ENCODE measurements at regions of chr1 and their contacts with region 1.

Region 1: DNA sequence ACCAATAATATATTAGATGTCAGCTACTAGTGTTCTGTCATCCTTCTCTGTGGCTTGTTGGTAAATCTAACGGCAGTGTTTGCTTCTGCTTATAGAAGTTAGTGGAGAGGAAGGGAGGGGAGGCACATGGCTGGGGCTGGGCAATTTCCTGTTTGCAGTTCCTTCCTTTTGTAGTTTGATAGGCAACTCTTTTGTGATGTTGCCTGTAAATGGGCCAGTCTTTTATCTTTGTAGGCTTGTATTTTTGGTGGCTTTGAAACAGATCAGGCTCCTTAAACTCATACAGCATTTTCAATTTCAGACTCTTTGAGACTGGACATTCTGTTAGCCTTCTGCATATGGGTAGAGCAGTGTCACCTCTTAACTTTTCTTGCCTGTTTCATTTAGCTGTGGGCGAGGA is 48.1 kb downstream of the CDC14A start:
- DNase-seq: peak; percentile 78
- H3K4me3 Mint-ChIP-seq: peak overlapping the region; percentile 42
- H3K27ac Mint-ChIP-seq: peak overlapping the region; percentile 93
- H3K4me1 Mint-ChIP-seq: peaks cover 87% of the 10 kb centered on the region
- H3K27me3 Mint-ChIP-seq: no peaks in the 10 kb centered on the region

Region 2: DNA sequence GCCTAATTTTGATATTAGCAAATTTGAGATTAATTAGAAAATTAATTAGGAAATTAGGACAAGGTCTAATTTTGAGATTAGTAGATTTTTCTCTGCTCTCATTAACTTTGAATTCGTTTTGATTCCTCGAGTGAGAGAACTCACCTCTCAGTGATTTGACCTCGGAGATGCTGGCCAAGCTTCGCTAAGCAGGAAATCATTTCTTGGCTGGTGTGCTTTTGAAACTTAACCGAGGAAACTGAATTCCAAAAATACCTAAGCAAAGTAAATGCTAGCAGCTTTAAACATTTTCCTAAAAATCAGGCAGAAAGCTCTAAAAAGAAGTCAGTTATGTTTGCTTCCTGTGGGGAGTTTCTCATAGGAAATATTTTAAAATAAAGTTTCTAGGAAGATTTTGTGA is 13.2 kb before region 1 on chr1:
- CTCF ChIA-PET with region 1: interaction called, 8 read pairs
- POLR2A ChIA-PET with region 1: interaction called, 22 read pairs
- DNase-seq: no peak
- H3K4me3 Mint-ChIP-seq: peak overlapping the region; percentile 58
- H3K27ac Mint-ChIP-seq: peak overlapping the region; percentile 72
- H3K4me1 Mint-ChIP-seq: peaks cover 64% of the 10 kb centered on the region
- H3K27me3 Mint-ChIP-seq: no peaks in the 10 kb centered on the region

Region 3: DNA sequence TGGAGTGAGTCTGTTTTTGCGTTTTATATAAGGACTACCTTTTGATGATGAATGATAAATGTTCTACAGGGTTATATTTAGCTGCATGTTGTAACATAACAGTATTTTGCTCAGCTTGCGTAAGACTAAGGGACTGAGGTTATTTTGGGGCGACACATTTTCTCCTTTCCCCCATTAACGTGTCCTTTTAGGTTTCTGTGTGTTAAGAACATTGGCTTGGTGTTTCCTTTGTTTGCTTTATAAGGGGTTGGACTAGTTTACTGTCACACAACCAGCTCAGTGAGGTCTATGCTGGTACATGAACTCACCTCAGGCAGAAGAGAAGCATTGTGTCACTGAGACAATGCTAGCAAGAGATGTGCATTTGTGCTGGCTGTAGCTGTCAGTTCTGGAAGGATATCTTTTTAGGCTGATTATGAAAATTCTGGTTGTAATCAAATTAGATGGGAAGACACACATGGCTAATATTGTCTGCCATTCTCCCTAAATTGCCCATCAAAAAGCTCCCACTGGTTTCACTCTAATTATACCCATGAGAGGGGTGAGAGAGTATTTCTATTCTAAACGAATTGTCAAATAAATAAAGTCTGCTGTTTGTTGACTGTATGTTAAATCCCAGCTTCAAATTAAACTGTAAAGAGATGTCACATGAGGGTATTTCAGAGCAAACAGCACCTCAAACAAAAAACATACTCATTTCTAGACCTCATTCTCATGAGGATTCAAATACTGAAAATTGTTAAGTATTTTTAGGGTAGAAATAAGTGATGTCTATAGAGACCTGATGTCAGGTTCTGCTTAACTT is 14.5 kb after region 1 on chr1:
- CTCF ChIA-PET with region 1: interaction called, 4 read pairs
- POLR2A ChIA-PET with region 1: interaction called, 30 read pairs
- DNase-seq: no peak
- H3K4me3 Mint-ChIP-seq: peak overlapping the region; percentile 24
- H3K27ac Mint-ChIP-seq: peak overlapping the region; percentile 62
- H3K4me1 Mint-ChIP-seq: peaks cover 62% of the 10 kb centered on the region
- H3K27me3 Mint-ChIP-seq: no peaks in the 10 kb centered on the region

Region 4: DNA sequence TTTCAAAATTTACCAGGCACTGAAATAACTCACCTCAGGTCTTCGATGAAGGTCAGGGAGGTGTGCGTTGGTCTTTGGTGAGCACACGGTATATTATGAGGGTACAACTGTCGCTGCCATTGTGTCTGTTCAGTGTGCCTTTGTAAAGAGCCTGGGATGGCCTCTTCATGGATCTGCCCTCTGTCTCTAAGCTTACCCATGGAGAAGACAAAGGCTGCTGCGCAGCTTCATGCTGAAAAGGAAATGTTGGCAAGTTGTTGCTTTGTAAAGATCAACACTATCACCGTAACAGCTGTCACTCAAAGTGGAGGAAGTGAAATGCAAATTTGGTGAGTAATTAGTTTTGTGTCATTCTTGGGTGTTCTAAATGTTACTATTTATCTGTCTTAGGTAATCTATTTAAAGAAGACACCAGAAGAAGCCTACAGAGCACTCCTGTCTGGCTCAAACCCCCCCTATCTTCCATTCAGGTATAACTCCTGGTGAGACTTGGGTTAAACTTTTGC is 23.5 kb after region 1 on chr1:
- CTCF ChIA-PET with region 1: interaction called, 13 read pairs
- POLR2A ChIA-PET with region 1: interaction called, 23 read pairs
- DNase-seq: peak; percentile 39
- H3K4me3 Mint-ChIP-seq: peak overlapping the region; percentile 56
- H3K27ac Mint-ChIP-seq: peak overlapping the region; percentile 90
- H3K4me1 Mint-ChIP-seq: peaks cover 60% of the 10 kb centered on the region
- H3K27me3 Mint-ChIP-seq: no peaks in the 10 kb centered on the region

Region 5: DNA sequence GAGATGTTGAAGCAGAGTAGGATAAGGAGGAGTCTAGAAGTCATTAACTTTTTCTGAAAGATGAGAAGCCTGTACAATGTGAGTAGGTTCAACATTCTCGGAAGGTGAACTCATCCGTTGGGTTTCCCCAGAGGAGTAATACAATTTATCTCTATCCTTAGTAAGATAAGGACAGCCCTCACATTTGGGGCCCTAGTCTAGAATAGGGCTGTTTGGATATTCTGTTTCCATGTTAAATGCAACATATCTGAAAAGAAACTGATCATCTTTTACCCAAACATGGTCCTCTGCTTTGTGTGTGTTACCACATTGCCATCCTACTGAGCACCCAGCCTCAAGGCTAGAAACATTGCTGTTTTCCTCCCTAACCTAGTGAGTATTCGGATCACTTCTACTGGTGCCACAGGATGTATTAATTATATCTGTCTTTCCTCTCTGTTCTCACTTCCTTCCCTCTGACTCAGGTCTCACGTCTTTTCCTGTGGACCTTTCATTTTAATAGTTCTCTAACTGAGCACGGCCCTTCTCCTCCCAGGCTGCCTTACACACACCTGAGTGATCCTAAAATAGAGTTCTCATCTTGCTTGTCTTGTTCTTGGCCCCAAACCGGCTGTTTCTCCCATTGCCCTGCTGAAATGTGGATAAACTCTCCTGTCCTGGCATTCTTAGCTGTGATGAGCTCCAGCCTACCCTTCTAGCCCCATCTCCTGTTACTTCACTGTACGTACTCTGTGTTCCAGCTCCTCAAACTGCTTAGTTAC is 43.6 kb after region 1 on chr1:
- CTCF ChIA-PET with region 1: interaction called, 7 read pairs
- POLR2A ChIA-PET with region 1: interaction called, 61 read pairs
- DNase-seq: peak; percentile 50
- H3K4me3 Mint-ChIP-seq: peak overlapping the region; percentile 80
- H3K27ac Mint-ChIP-seq: peak overlapping the region; percentile 98
- H3K4me1 Mint-ChIP-seq: peaks cover 89% of the 10 kb centered on the region
- H3K27me3 Mint-ChIP-seq: no peaks in the 10 kb centered on the region

Region 6: GRCh38 chr1:100452641-100453040 is 52.2 kb after region 1 on chr1:
- CTCF ChIA-PET with region 1: interaction called, 9 read pairs
- POLR2A ChIA-PET with region 1: interaction called, 61 read pairs
- DNase-seq: no peak
- H3K4me3 Mint-ChIP-seq: no peak overlapping the region
- H3K27ac Mint-ChIP-seq: peak overlapping the region; percentile 85
- H3K4me1 Mint-ChIP-seq: peaks cover 86% of the 10 kb centered on the region
- H3K27me3 Mint-ChIP-seq: no peaks in the 10 kb centered on the region